ENCODE measurements at regions of chr3 and their contacts with region 1.

Region 1: GRCh38 chr3:189186101-189186500 is 14.3 kb downstream of the TPRG1 start:
- DNase-seq: no peak
- ATAC-seq: no peak
- H3K4me3 ChIP-seq: no peak overlapping the region
- H3K4me3 Mint-ChIP-seq: no peak overlapping the region
- H3K27ac ChIP-seq: no peak overlapping the region
- H3K27ac Mint-ChIP-seq: no peak overlapping the region
- H3K4me1 ChIP-seq: no peaks in the 10 kb centered on the region
- H3K4me1 Mint-ChIP-seq: no peaks in the 10 kb centered on the region
- H3K27me3 ChIP-seq: no peaks in the 10 kb centered on the region
- H3K27me3 Mint-ChIP-seq: no peaks in the 10 kb centered on the region

Region 2: GRCh38 chr3:190224863-190225692 is 1039.0 kb after region 1 on chr3:
- CTCF ChIA-PET with region 1: no interaction called
- POLR2A ChIA-PET with region 1: interaction called in 1 of 2 experiments, 16 read pairs
- DNase-seq: peak in 1 of 35 experiments; percentile 39
- ATAC-seq: no peak
- H3K4me3 ChIP-seq: no peak overlapping the region
- H3K4me3 Mint-ChIP-seq: no peak overlapping the region
- H3K27ac ChIP-seq: no peak overlapping the region
- H3K27ac Mint-ChIP-seq: no peak overlapping the region
- H3K4me1 ChIP-seq: no peaks in the 10 kb centered on the region
- H3K4me1 Mint-ChIP-seq: no peaks in the 10 kb centered on the region
- H3K27me3 ChIP-seq: peaks cover 0 to 9% of the 10 kb centered on the region in 2 experiments
- H3K27me3 Mint-ChIP-seq: peaks cover 7 to 13% of the 10 kb centered on the region in 2 donors